A673 (cell line): ENCODE measurements at regions of chr21 and their contacts with region 1.

Region 1: DNA sequence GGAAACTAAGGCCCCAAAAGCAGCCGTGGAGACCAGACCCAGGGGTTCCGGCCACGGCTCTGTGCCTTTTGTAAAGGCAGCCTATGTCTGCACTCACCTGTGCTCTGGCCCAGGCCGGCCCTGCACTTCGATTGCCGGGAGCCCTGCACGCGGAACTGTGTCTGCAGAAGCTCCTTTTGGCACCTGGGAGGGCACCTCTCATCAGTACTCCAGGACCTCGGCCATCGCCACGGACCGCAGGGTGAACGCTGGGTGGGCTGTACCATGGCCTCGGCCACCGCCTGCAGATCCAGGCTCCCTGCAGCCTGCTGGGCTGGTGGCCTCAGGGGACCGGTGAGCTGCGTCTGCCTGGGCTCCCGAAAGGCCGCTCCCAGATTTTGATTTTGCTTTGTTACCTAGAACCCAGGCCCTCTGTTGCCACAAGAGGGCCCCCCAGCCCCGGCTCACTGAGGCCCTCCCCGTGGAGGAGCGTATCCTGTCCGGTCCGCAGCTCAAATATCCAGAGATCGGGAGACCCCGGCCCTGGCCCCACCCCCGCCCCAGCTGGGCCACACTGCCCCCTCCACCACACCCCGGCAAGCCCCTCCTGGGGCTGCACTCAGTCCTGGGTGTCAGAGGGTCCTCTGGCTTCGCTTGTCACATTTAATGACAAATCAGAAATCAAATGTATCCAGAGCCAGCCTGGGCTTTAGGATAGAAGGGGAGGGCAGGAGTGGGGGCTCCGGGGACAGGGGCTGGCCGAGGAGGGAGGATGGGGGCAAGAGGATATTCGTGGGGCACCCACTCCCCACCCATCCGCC is 60.2 kb upstream of the PDE9A start:
- DNase-seq: peak; percentile 80
- H3K4me3 ChIP-seq: peak overlapping the region; percentile 19
- H3K27ac ChIP-seq: no peak overlapping the region
- H3K4me1 ChIP-seq: no peaks in the 10 kb centered on the region
- H3K27me3 ChIP-seq: no peaks in the 10 kb centered on the region
- CTCF ChIP-seq: peak; percentile 83

Region 2: DNA sequence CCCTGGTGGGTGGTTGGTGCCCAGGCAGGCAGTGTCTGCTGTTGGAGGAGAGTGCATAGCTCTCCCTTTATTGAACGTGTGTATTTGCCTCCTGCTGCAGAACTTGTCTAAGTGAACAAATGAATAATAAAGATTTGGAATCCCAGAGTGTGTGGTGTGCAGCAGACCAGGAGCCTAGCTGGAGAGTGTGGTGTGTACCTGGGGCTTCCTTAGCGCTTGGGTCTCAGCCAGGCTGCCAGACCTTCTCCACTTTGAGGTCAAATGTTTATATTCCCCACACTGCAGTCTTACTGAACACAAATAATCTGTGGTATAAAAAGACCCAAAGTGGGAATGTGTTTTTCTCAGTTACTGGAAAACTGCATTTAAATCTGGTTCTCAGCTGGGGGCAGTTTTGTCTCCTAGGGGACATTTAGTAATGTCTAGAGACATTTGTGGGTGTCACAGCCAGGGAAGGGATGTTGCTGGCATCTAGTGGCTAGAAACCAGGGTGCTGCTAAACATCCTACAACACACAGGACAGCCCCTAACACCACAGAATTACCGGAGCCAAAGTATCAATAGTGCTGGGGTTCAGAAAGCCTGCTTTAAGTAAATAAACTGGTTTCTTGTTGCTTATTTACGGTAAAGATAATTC is 56.0 kb before region 1 on chr21:
- CTCF ChIA-PET with region 1: no interaction called
- POLR2A ChIA-PET with region 1: interaction called, 3 read pairs
- intact Hi-C with region 1: loop called (anchors 10 kb)
- DNase-seq: peak; percentile 53
- H3K4me3 ChIP-seq: no peak overlapping the region
- H3K27ac ChIP-seq: no peak overlapping the region
- H3K4me1 ChIP-seq: peaks cover 29% of the 10 kb centered on the region
- H3K27me3 ChIP-seq: no peaks in the 10 kb centered on the region
- CTCF ChIP-seq: peak; percentile 58

Region 3: DNA sequence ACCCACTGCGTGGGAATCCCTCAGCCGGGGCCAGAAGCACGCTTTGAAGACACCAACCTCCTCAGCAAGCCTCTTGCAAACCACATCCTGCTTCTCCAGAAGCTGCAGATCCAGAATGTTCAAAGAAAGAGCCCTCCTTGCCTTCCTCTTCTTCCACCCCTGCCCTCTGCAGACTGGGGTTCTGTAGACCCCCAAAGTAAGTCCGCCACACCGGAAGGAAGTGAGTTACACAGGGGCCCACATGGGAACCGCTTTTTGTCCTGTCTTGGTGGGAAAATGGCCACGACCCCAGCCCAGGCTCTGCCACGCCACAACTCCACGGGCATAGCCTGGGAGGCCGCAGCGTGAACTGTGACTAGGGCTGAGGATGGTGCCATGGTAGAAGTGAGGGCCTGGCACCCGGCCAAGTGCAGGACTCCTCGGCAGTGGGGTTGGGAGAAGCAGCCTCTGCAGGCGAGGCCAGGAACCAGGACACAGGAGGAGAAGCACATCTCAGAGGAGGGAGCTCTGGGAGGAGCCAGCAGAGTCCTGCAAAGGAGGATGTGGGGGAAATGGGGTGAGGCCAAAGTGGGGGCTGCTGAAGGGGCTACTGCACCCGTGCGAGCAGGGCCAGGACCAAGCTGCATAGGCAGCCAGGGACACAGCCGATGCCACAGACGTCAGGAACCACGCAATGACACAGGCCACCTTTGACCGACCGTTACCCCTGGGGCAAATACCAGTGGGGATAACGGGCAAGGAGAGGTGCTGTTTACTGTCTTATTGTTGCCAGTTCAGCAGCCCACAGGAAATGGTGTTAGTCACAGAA is 91.1 kb after region 1 on chr21:
- CTCF ChIA-PET with region 1: no interaction called
- POLR2A ChIA-PET with region 1: no interaction called
- intact Hi-C with region 1: no loop called
- DNase-seq: no peak
- H3K4me3 ChIP-seq: no peak overlapping the region
- H3K27ac ChIP-seq: no peak overlapping the region
- H3K4me1 ChIP-seq: no peaks in the 10 kb centered on the region
- H3K27me3 ChIP-seq: no peaks in the 10 kb centered on the region
- CTCF ChIP-seq: no peak

Region 4: GRCh38 chr21:42761681-42762335 is 168.6 kb after region 1 on chr21:
- CTCF ChIA-PET with region 1: no interaction called
- POLR2A ChIA-PET with region 1: interaction called, 13 read pairs
- intact Hi-C with region 1: no loop called
- DNase-seq: no peak
- H3K4me3 ChIP-seq: no peak overlapping the region
- H3K27ac ChIP-seq: no peak overlapping the region
- H3K4me1 ChIP-seq: no peaks in the 10 kb centered on the region
- H3K27me3 ChIP-seq: no peaks in the 10 kb centered on the region
- CTCF ChIP-seq: no peak

Region 5: GRCh38 chr21:42818328-42818749 is 225.1 kb after region 1 on chr21:
- CTCF ChIA-PET with region 1: interaction called, 7 read pairs
- POLR2A ChIA-PET with region 1: no interaction called
- intact Hi-C with region 1: loop called (anchors 5 kb)
- DNase-seq: peak; percentile 59
- H3K4me3 ChIP-seq: no peak overlapping the region
- H3K27ac ChIP-seq: no peak overlapping the region
- H3K4me1 ChIP-seq: peaks cover 12% of the 10 kb centered on the region
- H3K27me3 ChIP-seq: no peaks in the 10 kb centered on the region
- CTCF ChIP-seq: peak; percentile 94

Region 6: GRCh38 chr21:42855171-42855936 is 262.1 kb after region 1 on chr21:
- CTCF ChIA-PET with region 1: no interaction called
- POLR2A ChIA-PET with region 1: interaction called, 13 read pairs
- intact Hi-C with region 1: no loop called
- DNase-seq: no peak
- H3K4me3 ChIP-seq: no peak overlapping the region
- H3K27ac ChIP-seq: no peak overlapping the region
- H3K4me1 ChIP-seq: no peaks in the 10 kb centered on the region
- H3K27me3 ChIP-seq: no peaks in the 10 kb centered on the region
- CTCF ChIP-seq: no peak

Region 7: GRCh38 chr21:43646550-43647260 is 1053.5 kb after region 1 on chr21:
- CTCF ChIA-PET with region 1: interaction called, 4 read pairs
- POLR2A ChIA-PET with region 1: no interaction called
- intact Hi-C with region 1: loop called (anchors 10 kb)
- DNase-seq: peak; percentile 93
- H3K4me3 ChIP-seq: no peak overlapping the region
- H3K27ac ChIP-seq: no peak overlapping the region
- H3K4me1 ChIP-seq: peaks cover 15% of the 10 kb centered on the region
- H3K27me3 ChIP-seq: no peaks in the 10 kb centered on the region
- CTCF ChIP-seq: peak; percentile 99